ENCODE measurements at regions of chr3 and their contacts with region 1.

Region 1: DNA sequence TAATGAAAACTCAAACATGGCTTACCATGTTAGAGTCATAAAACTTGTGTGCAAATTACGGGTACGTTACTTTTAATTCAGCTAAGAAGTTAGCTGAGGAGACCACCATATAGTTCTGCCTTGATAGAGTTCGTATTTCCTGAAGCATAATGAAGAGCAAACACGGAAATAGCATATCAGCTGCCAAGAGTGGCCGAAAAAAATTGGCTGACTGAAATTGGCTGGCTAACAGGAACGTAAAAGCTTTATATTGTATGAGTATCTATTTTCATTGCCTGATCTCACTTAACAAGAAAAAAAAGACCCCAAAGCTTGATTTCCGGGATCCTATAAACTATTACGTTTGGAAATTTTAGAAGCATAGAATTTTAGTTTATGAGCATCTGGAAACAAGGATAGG is 1222.9 kb downstream of the ZPLD1 start:
- DNase-seq: no peak
- ATAC-seq: no peak
- H3K4me3 Mint-ChIP-seq: no peak overlapping the region
- H3K27ac Mint-ChIP-seq: no peak overlapping the region
- H3K4me1 Mint-ChIP-seq: no peaks in the 10 kb centered on the region
- H3K27me3 Mint-ChIP-seq: no peaks in the 10 kb centered on the region
- CTCF ChIP-seq: no peak

Region 2: GRCh38 chr3:103644450-103644849 is 13.3 kb before region 1 on chr3:
- CTCF ChIA-PET with region 1: no interaction called
- POLR2A ChIA-PET with region 1: no interaction called
- intact Hi-C with region 1: loop called (anchors 2 kb)
- DNase-seq: no peak
- ATAC-seq: no peak
- H3K4me3 Mint-ChIP-seq: no peak overlapping the region
- H3K27ac Mint-ChIP-seq: no peak overlapping the region
- H3K4me1 Mint-ChIP-seq: no peaks in the 10 kb centered on the region
- H3K27me3 Mint-ChIP-seq: no peaks in the 10 kb centered on the region
- CTCF ChIP-seq: no peak

Measured in activated B cell treated with CpG ODN at 0.5 μM for 24 hours (primary cell).